CD4-positive, alpha-beta T cell (primary cell): ENCODE measurements at regions of chr17 and their contacts with region 1.

Region 1: DNA sequence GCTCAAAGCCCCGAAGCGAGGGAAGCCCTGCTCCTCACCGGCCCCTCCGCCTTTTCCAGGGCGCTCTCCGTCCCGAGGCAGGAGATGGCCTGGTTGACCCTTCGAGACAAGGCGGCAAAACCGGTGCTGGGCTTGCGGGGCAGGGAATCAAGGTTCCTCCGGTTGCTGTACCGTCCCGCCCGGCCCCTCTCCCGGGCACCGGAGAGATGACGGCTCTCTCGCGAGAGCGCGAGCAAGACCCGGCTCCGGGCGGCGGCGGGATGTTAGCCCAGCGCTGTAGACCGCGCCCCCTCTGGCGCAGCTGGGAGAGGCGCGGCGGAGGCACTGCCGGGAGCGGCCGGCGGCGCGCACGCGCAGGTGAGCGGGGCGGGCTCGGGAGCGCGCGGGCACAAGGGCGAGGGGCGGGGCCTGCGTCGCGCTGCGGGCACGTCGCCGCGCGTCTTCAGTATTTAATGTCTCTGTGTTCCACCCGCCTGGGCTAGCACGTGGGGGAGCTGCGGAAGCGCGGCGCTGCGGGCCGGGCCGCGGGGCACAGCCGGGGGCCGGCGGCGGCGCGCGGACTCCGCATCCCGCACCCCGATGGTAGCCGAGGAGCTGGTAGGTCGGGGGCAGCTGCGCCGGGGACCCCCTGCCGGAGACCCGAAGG is at the start of gene AKAP1:
- DNase-seq: peak; percentile 87 to 99 (median 94)
- ATAC-seq: peak; percentile 88
- H3K4me3 ChIP-seq: peak within 1 kb of the TSS; percentile 89
- H3K4me3 Mint-ChIP-seq: peak within 1 kb of the TSS; percentile 95
- H3K27ac ChIP-seq: peak within 1 kb of the TSS; percentile 84 to 85
- H3K27ac Mint-ChIP-seq: peak within 1 kb of the TSS; percentile 89
- H3K4me1 ChIP-seq: peaks cover 20% of the 10 kb centered on the region
- H3K4me1 Mint-ChIP-seq: peaks cover 36% of the 10 kb centered on the region
- H3K27me3 ChIP-seq: no peaks in the 10 kb centered on the region
- H3K27me3 Mint-ChIP-seq: no peaks in the 10 kb centered on the region
- CTCF ChIP-seq: no peak
- total RNA-seq, gene AKAP1: 20.3 to 23.1 TPM

Region 2: GRCh38 chr17:55421179-55421934 is 1663.6 kb before region 1 on chr17 and contains the start of gene MMD:
- CTCF ChIA-PET with region 1: no interaction called
- POLR2A ChIA-PET with region 1: no interaction called
- intact Hi-C with region 1: loop called in 1 of 2 experiments (anchors 10 kb)
- DNase-seq: peak in 3 of 14 experiments; percentile 1 to 37 (median 13)
- ATAC-seq: no peak
- H3K4me3 ChIP-seq: peak within 1 kb of the TSS; percentile 99
- H3K4me3 Mint-ChIP-seq: peak within 1 kb of the TSS; percentile 95
- H3K27ac ChIP-seq: peak within 1 kb of the TSS; percentile 65
- H3K27ac Mint-ChIP-seq: peak within 1 kb of the TSS; percentile 91
- H3K4me1 ChIP-seq: peaks cover 21% of the 10 kb centered on the region
- H3K4me1 Mint-ChIP-seq: peaks cover 30% of the 10 kb centered on the region
- H3K27me3 ChIP-seq: peaks cover 6 to 7% of the 10 kb centered on the region in 2 experiments
- H3K27me3 Mint-ChIP-seq: peaks cover 32% of the 10 kb centered on the region
- CTCF ChIP-seq: no peak
- total RNA-seq, gene MMD: 15.3 to 17.4 TPM

Region 3: DNA sequence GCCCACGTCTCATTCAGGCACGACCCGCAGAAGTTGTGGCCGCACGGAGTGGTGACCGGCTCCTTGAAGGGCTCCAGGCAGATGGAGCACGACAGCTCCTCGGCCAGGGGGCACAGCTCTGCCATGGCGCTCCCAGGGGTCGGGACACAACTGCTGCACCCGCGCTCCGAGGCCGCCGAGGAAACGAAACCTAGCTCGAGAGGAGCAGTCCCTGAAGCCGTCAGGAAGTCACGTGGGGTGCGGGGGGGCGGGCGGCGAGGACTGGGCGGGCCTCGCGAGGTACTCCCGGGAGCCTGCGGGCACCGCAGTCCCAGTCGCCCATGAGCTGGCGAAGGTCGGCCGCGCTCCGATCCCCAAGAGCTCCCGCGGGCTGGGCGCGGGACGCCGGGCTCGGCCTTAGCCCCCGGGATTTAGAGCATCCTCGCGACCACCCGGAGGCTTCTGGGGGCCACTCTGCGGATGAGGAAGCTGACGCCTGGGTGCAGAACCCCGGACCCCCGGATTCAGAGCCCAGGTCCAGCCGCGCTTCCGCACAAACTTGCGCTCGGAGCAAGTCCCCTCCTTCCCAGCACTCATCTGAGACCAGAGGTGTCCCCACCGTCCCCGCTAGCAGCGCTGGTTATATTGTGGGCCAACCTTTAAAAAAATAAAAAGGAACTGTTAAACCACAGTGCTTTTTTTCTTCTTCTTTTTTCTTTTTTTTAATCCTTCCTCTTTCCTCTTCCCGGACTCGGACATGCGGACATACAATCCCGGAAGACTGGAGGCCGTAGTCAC is 170.9 kb before region 1 on chr17 and contains the start of gene TRIM25:
- CTCF ChIA-PET with region 1: no interaction called
- POLR2A ChIA-PET with region 1: interaction called, 11 read pairs
- intact Hi-C with region 1: no loop called
- DNase-seq: peak; percentile 77 to 94 (median 88)
- ATAC-seq: peak; percentile 90
- H3K4me3 ChIP-seq: peak within 1 kb of the TSS; percentile 89
- H3K4me3 Mint-ChIP-seq: peak within 1 kb of the TSS; percentile 90
- H3K27ac ChIP-seq: peak within 1 kb of the TSS; percentile 63 to 70
- H3K27ac Mint-ChIP-seq: peak within 1 kb of the TSS; percentile 85
- H3K4me1 ChIP-seq: peaks cover 53% of the 10 kb centered on the region
- H3K4me1 Mint-ChIP-seq: peaks cover 38% of the 10 kb centered on the region
- H3K27me3 ChIP-seq: no peaks in the 10 kb centered on the region
- H3K27me3 Mint-ChIP-seq: no peaks in the 10 kb centered on the region
- CTCF ChIP-seq: no peak
- total RNA-seq, gene TRIM25: 31.7 to 33.2 TPM

Region 4: GRCh38 chr17:57255776-57256681 is 171.1 kb after region 1 on chr17 and contains the start of gene MSI2:
- CTCF ChIA-PET with region 1: no interaction called
- POLR2A ChIA-PET with region 1: interaction called, 9 read pairs
- intact Hi-C with region 1: loop called in 1 of 2 experiments (anchors 2 kb)
- DNase-seq: peak; percentile 82 to 96 (median 90)
- ATAC-seq: peak; percentile 71
- H3K4me3 ChIP-seq: peak within 1 kb of the TSS; percentile 74
- H3K4me3 Mint-ChIP-seq: peak within 1 kb of the TSS; percentile 99
- H3K27ac ChIP-seq: peak within 1 kb of the TSS; percentile 72 to 82
- H3K27ac Mint-ChIP-seq: peak within 1 kb of the TSS; percentile 98
- H3K4me1 ChIP-seq: peaks cover 35% of the 10 kb centered on the region
- H3K4me1 Mint-ChIP-seq: peaks cover 48% of the 10 kb centered on the region
- H3K27me3 ChIP-seq: no peaks in the 10 kb centered on the region
- H3K27me3 Mint-ChIP-seq: no peaks in the 10 kb centered on the region
- CTCF ChIP-seq: no peak
- total RNA-seq, gene MSI2: 129 to 132 TPM

Region 5: DNA sequence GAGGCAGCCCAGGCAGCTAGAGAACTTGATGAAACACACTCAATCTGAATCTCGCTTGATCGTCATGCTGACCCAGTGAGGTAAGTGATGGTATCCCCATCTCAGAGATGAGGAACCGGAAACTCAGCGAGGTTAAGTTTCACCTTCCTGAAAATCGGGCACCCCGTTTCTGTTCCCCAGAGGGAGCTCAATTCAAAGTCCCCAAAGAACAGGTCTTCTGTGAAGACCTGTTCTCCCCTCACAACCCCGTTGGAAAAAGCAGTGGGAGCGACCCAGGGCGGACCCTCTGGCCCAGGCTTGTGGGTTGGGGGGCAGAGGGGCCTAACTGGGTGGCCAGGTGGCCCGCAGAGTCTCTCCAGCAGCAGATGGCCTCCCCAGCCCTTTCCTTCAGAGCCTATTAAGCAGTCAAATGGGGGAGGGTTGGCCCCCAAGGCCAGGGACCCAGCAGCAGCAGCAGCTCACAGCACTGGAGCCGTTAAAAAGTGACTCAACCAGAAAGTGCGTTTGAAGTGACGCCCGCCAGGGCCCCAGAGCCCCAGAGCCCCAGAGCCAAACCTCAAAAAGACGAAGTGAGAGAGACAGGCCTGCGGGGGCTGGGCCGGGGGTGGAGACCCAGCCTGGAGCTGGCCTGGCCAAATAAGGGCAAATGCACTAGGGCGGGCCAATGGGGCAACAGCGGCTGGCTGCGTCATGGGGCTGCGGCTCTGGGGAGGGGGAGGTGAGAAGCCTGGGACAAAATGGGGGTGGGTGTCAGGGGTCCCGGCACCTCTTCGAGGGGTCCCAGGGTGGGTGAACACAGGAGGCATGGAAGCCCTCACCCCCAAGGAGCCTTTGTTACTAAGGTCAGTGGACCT is 1252.9 kb after region 1 on chr17:
- CTCF ChIA-PET with region 1: no interaction called
- POLR2A ChIA-PET with region 1: no interaction called
- intact Hi-C with region 1: loop called in 1 of 2 experiments (anchors 10 kb)
- DNase-seq: peak; percentile 78 to 96 (median 88)
- ATAC-seq: peak; percentile 73
- H3K4me3 ChIP-seq: peak overlapping the region; percentile 84
- H3K4me3 Mint-ChIP-seq: peak overlapping the region; percentile 90
- H3K27ac ChIP-seq: peak overlapping the region; percentile 97 to 98
- H3K27ac Mint-ChIP-seq: peak overlapping the region; percentile 84
- H3K4me1 ChIP-seq: peaks cover 96% of the 10 kb centered on the region
- H3K4me1 Mint-ChIP-seq: peaks cover 92% of the 10 kb centered on the region
- H3K27me3 ChIP-seq: no peaks in the 10 kb centered on the region
- H3K27me3 Mint-ChIP-seq: no peaks in the 10 kb centered on the region
- CTCF ChIP-seq: no peak